Lower leg skin (tissue), 4 donors: ENCODE measurements at regions of chr7 and their contacts with region 1.

Region 1: DNA sequence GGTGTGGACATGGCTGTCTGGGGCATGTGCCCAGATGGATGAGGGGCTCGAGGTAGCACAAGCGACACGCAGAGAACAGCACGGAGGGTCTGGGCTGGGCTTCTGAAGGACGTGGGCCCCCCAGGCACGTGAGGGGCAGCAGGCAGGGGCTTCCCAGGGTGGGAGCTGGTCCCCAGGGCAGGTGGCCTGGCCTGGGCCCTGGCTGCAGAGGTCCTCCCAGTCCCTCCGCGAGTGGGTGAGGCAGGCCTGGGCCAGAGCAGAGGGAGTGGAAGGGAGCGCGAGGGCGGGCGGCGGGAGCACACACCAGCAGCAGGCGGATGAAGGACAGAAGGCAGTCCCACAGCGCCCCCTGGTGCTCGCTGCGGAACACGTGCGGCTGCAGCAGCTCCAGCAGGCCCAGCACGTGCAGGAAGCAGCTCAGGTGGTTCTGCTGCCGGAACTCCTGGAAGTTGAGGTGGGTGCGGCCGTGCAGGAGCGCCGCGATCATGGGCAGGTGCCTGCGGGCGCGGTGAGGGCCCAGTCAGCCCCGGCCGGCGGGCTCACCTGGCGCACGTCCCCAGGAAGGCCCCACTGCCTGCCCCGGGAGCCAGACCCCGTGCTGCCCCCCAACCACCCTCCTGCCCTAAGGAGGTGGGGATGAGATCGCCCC is 14.7 kb upstream of the MICALL2 start:
- DNase-seq: peak; percentile 81 to 97
- H3K4me3 ChIP-seq: no peak overlapping the region
- CTCF ChIP-seq: peak in 1 of 3 donors; percentile 75
- POLR2A ChIP-seq: no peak

Region 2: DNA sequence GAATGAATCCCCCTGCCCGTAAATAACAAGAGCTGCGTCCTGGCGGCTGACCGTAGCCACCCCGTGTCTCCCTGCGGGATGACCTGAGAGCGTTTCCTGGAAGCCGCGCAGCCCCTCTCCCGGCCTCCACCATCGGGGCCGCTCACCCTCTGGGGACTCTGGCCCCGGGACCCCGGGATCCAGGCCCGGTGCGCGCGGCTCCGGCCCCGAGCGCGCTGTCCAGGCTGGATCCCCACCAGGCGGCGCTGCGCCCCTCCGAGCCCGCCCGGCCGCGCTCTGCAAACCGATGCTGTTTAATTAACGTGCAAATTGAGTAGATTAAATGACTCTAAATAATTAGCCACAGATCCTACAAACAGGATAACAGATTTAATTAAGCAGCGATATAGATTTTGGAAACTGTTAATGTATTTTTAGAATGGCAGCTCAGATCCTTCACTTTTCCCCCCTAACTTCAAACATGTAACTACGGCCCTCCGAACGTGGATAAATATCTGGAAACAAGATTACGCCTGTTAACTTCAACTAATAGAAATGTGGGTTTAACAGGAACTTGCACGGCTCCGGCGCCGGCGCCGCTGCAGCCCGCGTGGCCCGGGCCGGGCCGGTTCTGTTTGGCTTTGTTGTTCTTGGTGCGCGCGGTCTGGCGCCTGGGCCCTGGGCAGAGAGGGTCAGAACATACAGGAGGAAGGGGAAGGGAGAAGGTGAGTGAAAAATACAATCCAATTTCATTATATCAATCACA is 248.4 kb before region 1 on chr7:
- intact Hi-C with region 1: loop called (anchors 10 kb)
- DNase-seq: no peak
- H3K4me3 ChIP-seq: no peak overlapping the region
- CTCF ChIP-seq: no peak
- POLR2A ChIP-seq: no peak

Region 3: GRCh38 chr7:1386623-1387220 is 87.3 kb before region 1 on chr7:
- intact Hi-C with region 1: no loop called
- DNase-seq: no peak
- H3K4me3 ChIP-seq: no peak overlapping the region
- CTCF ChIP-seq: no peak
- POLR2A ChIP-seq: no peak

Region 4: GRCh38 chr7:1432411-1433082 is 41.4 kb before region 1 on chr7:
- intact Hi-C with region 1: loop called (anchors 5 kb)
- DNase-seq: peak; percentile 49 to 94
- H3K4me3 ChIP-seq: no peak overlapping the region
- CTCF ChIP-seq: peak in 1 of 3 donors; percentile 42
- POLR2A ChIP-seq: no peak